SK-N-SH (cell line): ENCODE measurements at regions of chr1 and their contacts with region 1.

Region 1: DNA sequence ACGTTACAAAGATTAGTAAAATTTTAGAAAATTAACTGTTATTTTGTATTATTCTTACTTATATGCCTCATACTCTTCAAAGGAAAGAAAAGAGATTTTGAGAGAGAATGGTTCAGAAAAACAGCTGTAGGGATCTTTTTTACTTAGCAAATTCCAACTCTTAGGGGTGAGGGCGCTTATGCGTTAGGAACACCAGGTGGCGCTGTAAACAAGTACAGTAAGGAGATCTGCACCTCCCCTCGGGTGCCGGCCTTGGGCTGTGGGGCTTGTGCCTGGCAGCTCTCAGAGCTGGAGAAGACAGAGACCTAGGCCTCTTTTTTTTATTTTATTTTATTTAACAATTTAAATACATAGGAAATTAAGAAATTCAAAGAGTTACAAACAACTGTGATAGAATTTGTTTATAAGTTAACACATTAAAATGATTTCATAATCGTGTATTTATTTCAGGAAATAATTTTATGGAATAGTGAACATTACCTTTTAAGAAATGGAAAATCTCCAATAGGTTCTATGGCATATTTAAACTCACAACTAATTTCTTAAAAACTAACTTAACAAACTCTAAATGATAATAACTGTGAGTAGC is 32.6 kb downstream of the UTP25 start:
- DNase-seq: peak; percentile 89
- H3K4me3 ChIP-seq: peak overlapping the region in 1 of 2 experiments; percentile 53; a peak in 1 of 4 replicates
- H3K27ac ChIP-seq: peak overlapping the region in 1 of 2 experiments; percentile 4; a peak in 1 of 4 replicates
- H3K4me1 ChIP-seq: peaks cover 12 to 14% of the 10 kb centered on the region in 2 experiments; a peak in 3 of 4 replicates
- H3K27me3 ChIP-seq: no peaks in the 10 kb centered on the region
- CTCF ChIP-seq: peak; percentile 94
- EP300 ChIP-seq: no peak
- RAD21 ChIP-seq: peak; percentile 93

Region 2: GRCh38 chr1:209839875-209840491 is 20.4 kb before region 1 on chr1:
- CTCF ChIA-PET with region 1: interaction called, 16 read pairs
- POLR2A ChIA-PET with region 1: interaction called, 3 read pairs
- DNase-seq: no peak
- H3K4me3 ChIP-seq: peak overlapping the region in 1 of 2 experiments; percentile 16; a peak in 1 of 4 replicates
- H3K27ac ChIP-seq: peak overlapping the region; percentile 93 to 98
- H3K4me1 ChIP-seq: peaks cover 11 to 65% of the 10 kb centered on the region in 2 experiments
- H3K27me3 ChIP-seq: no peaks in the 10 kb centered on the region
- CTCF ChIP-seq: no peak
- EP300 ChIP-seq: peak in 1 of 2 experiments; percentile 95; a peak in 2 of 4 replicates
- RAD21 ChIP-seq: no peak

Region 3: DNA sequence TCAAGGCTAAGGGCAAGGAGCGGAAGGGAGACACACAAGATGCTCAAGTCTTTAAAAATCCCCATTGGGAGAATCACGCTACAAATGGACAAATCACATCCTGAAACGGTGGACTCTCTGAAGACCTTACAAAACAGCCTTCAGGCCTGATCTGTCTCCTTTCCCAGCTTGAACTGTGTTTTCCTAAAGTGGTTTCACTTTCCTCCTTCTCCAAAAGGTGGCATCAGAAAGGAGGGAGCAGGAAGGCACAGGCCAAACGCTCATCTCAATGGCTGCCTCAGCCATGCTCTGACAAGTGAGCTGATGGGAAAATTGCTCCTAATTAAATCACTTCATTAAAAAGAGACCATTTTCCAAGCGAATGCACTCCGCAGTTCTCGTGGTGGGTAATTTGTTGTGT is 15.1 kb after region 1 on chr1:
- CTCF ChIA-PET with region 1: interaction called, 48 read pairs
- POLR2A ChIA-PET with region 1: no interaction called
- DNase-seq: no peak
- H3K4me3 ChIP-seq: no peak overlapping the region
- H3K27ac ChIP-seq: peak overlapping the region in 1 of 2 experiments; percentile 68; a peak in 2 of 4 replicates
- H3K4me1 ChIP-seq: peaks cover 45 to 55% of the 10 kb centered on the region in 2 experiments
- H3K27me3 ChIP-seq: no peaks in the 10 kb centered on the region
- CTCF ChIP-seq: peak; percentile 63
- EP300 ChIP-seq: no peak
- RAD21 ChIP-seq: peak; percentile 58

Region 4: DNA sequence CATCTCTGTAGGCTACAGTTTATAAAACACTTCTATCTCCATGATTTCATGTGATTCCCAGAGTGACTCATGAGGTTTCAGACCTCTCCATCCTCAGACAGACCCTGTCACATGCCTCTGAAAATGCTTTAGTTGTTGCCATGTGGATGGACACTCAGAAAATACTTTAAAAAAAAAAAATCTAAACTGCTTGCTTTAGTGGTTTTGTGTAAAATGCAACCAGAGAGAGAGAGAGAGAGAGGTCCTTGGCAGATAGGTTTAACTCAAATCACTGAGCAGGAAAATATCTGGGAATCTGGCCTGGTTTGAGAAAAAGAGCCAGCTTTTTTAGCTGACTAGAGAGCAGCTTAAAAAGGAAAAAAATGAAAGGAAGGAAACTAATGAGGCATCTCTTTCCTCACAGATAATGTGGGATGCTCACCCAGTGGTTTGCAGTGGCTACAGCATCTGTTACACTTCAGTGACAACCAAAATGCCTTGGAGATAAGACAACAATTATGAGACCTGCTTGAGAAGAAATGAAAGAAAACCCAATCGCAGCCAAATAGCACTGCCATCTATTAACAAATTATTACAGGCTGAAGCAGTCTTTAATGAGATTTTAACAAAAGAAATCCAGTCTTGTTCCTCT is 23.1 kb after region 1 on chr1:
- CTCF ChIA-PET with region 1: interaction called, 19 read pairs
- POLR2A ChIA-PET with region 1: no interaction called
- DNase-seq: no peak
- H3K4me3 ChIP-seq: no peak overlapping the region
- H3K27ac ChIP-seq: peak overlapping the region; percentile 51 to 99; a peak in 3 of 4 replicates
- H3K4me1 ChIP-seq: peaks cover 33 to 48% of the 10 kb centered on the region in 2 experiments
- H3K27me3 ChIP-seq: no peaks in the 10 kb centered on the region
- CTCF ChIP-seq: peak; percentile 33
- EP300 ChIP-seq: no peak
- RAD21 ChIP-seq: no peak

Region 5: DNA sequence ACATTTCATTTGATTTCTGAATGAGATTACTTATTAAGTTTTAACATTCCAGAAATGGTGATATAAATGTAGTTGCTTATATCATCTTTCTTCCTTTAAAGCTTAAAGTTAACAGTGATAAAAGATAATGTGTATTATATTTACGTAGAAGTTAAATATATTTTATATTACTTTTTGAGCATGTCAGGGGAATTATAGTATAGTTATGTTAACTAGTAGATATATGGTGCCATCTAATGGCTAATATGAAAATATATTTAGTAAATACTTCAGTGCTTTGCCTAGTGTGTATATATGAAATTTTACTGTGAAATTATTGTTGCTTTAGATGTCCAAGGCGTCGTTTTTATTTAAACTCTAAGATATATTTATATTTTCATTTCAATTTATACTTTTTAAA is 129.1 kb after region 1 on chr1:
- CTCF ChIA-PET with region 1: interaction called, 317 read pairs
- POLR2A ChIA-PET with region 1: no interaction called
- DNase-seq: peak; percentile 28
- H3K4me3 ChIP-seq: no peak overlapping the region
- H3K27ac ChIP-seq: peak overlapping the region in 1 of 2 experiments; percentile 40; a peak in 2 of 4 replicates
- H3K4me1 ChIP-seq: peaks cover 0 to 9% of the 10 kb centered on the region in 2 experiments; a peak in 2 of 4 replicates
- H3K27me3 ChIP-seq: no peaks in the 10 kb centered on the region
- CTCF ChIP-seq: peak; percentile 61
- EP300 ChIP-seq: no peak
- RAD21 ChIP-seq: peak; percentile 56